ENCODE measurements at regions of chr12 and their contacts with region 1.

Region 1: GRCh38 chr12:102169922-102170621 is 27.6 kb downstream of the PMCH start:
- DNase-seq: no peak
- H3K4me3 Mint-ChIP-seq: no peak overlapping the region
- H3K27ac Mint-ChIP-seq: no peak overlapping the region
- H3K4me1 Mint-ChIP-seq: peaks cover 8% of the 10 kb centered on the region
- H3K27me3 Mint-ChIP-seq: no peaks in the 10 kb centered on the region

Region 2: DNA sequence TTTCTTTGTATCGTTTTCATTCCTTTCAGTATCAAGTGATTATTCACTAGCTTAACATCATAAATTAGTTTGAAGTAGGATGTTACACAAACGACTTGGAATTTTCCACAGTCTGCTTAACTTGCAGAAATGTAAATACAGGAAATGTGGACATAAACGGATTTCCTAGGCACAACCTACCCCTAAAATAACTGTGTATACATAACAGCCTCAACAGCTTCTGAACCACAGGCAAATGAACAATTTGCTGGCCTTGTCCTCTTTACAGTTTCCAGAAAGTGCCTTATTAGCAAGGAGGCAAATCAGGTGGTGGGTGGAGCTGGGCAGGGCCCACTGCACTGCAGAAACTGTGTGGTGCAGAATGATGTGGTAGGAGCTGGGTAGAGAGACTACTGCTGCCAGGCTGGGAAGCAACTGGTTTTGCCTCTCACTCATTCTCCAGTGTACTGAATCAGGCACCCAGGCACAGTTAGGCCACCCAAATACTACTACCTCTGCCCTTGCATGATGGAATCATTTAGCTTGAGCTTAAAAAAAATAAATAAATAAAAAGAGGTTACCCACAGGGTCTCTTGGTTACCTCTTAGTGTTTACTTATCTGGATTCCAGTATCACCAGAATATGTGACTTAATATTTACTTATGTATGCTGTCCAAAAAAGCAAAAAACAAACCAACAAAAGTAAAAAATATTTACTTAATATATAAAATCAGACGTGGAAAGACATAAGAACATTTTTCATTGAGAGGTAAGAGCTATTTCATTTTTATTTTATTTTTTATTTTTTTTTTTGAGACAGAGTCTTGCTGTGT is 278.4 kb before region 1 on chr12:
- CTCF ChIA-PET with region 1: no interaction called
- DNase-seq: no peak
- H3K4me3 Mint-ChIP-seq: no peak overlapping the region
- H3K27ac Mint-ChIP-seq: no peak overlapping the region
- H3K4me1 Mint-ChIP-seq: no peaks in the 10 kb centered on the region
- H3K27me3 Mint-ChIP-seq: no peaks in the 10 kb centered on the region

Region 3: GRCh38 chr12:102061560-102062418 is 108.3 kb before region 1 on chr12 and contains the start of gene WASHC3:
- CTCF ChIA-PET with region 1: no interaction called
- DNase-seq: peak; percentile 98
- H3K4me3 Mint-ChIP-seq: peak within 1 kb of the TSS; percentile 90
- H3K27ac Mint-ChIP-seq: peak within 1 kb of the TSS; percentile 97
- H3K4me1 Mint-ChIP-seq: peaks cover 59% of the 10 kb centered on the region
- H3K27me3 Mint-ChIP-seq: peaks cover 8% of the 10 kb centered on the region

Region 4: DNA sequence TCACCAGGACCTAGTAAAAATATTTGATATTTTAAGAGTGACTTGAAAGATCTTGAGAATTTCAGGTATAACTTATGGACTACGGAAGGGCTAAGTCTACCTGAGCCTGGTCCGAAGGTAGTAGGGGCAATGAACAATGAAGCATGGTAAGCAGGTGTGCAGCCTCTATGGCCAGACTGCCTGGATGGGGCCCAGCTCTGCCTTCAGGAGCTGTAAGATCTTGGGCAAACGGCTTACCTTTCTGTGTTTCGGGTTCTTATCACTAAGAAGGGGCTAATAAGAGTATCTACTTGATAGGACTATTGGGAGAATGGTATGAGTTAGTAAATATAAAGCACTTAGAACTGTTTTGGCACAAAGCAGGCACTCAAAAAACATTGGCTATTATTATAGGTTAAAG is 89.2 kb before region 1 on chr12:
- CTCF ChIA-PET with region 1: no interaction called
- DNase-seq: no peak
- H3K4me3 Mint-ChIP-seq: no peak overlapping the region
- H3K27ac Mint-ChIP-seq: no peak overlapping the region
- H3K4me1 Mint-ChIP-seq: no peaks in the 10 kb centered on the region
- H3K27me3 Mint-ChIP-seq: no peaks in the 10 kb centered on the region

Region 5: DNA sequence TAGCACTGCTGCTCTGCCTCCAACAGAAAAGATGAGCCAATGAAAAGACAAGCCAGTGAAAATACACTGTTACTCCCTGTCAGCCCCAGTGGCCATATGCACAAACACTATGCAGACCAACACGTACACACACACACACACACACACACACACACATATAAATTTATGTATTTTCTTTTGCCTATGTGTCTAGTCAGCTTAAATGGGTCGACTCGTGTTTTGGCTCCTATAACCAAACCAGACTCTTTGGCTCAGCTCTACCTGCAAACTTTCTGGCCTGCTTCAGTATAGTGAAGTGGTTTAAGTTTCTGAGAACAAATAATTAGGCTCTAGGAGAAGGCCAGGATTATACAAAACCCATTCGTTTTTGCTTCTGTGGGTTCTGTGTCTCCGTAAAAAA is 57.9 kb after region 1 on chr12:
- CTCF ChIA-PET with region 1: no interaction called
- DNase-seq: no peak
- H3K4me3 Mint-ChIP-seq: no peak overlapping the region
- H3K27ac Mint-ChIP-seq: no peak overlapping the region
- H3K4me1 Mint-ChIP-seq: no peaks in the 10 kb centered on the region
- H3K27me3 Mint-ChIP-seq: no peaks in the 10 kb centered on the region

Region 6: GRCh38 chr12:102484428-102484958 is 314.4 kb after region 1 on chr12:
- CTCF ChIA-PET with region 1: interaction called, 14 read pairs
- DNase-seq: peak; percentile 68
- H3K4me3 Mint-ChIP-seq: no peak overlapping the region
- H3K27ac Mint-ChIP-seq: peak overlapping the region; percentile 73
- H3K4me1 Mint-ChIP-seq: peaks cover 23% of the 10 kb centered on the region
- H3K27me3 Mint-ChIP-seq: no peaks in the 10 kb centered on the region